ENCODE measurements at regions of chr19 and their contacts with region 1.

Region 1: DNA sequence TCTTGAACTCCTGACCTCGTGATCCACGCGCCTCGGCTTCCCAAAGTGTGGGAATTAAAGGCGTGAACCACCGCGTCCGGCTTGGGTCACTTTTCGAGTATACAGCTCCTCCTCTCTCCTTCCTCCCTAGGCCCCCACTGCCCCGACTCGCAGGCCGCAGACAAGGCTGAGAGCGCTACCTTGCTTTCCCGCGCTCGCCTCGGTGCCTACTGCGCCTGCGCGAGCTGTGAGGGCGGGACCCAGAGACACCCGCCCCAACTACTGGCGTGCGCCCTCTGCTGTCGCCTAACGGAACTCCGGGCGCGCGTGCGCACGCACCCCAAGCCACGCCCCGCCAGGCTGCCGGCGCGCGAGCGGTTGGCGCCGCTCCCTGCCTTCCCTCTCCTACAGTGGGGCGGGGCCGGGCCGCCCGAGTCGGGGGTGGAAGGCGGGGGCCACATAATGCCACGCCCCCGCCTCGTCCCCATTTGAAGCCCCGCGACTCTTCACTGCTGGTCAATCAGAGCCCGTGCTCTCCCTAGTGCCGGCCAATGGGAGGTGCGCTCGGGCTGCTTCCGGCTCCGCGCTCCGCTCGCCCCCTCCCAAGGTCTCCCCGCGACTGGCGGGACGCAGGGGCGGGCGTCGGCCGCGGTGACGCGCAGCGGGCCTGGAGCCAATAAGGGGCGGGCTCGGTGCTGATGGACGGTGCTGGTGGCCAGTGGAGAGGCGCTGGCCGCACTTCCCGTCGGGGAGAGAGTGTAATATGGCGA is at the start of gene RAB8A:
- DNase-seq: peak; percentile 99
- H3K4me3 ChIP-seq: peak within 1 kb of the TSS; percentile 90
- H3K27ac ChIP-seq: peak within 1 kb of the TSS; percentile 95
- H3K4me1 ChIP-seq: peaks cover 17% of the 10 kb centered on the region
- H3K27me3 ChIP-seq: no peaks in the 10 kb centered on the region
- CTCF ChIP-seq: peak; percentile 85
- total RNA-seq, gene RAB8A: 113 and 126 TPM in 2 replicates

Region 2: DNA sequence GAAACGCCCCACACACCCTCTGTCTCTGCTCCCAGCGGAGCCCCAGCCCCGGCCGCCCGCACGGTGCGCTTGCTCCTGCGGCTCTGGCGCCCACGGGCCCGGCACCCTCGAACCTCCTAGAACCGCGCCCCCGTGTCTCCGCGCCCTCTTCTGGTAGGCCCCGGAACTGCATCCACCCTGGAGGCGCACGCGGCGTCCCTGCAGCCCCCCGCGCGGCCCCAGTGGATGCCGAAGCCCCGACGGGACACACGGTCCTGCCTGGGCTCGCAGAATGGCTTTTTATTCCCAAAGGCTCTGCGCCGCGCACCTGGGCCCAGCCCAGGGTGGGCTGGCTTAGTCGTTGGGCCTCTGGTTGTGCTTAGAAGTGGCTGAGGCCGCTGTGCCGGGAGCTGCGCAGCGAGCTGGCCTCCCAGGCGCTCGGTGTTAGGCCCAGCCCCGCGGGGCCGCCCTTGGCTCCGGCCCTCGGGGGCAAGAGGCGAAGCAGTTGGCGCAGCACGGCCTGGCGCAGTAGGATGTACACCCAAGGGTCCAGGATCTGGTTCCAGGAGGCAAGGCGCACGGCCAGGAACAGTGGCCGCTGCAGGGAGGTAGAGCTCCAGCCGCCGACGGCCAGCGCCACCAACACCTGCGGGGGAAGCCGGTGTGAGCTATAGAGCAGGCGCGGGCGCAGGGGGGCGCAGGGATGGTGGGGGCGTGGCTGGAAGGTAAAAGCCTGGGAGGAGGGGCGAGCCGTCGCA is 1639.0 kb before region 1 on chr19:
- CTCF ChIA-PET with region 1: interaction called, 12 read pairs
- POLR2A ChIA-PET with region 1: no interaction called
- intact Hi-C with region 1: no loop called
- DNase-seq: peak; percentile 80
- H3K4me3 ChIP-seq: no peak overlapping the region
- H3K27ac ChIP-seq: no peak overlapping the region
- H3K4me1 ChIP-seq: peaks cover 28% of the 10 kb centered on the region
- H3K27me3 ChIP-seq: no peaks in the 10 kb centered on the region
- CTCF ChIP-seq: peak; percentile 99

Region 3: DNA sequence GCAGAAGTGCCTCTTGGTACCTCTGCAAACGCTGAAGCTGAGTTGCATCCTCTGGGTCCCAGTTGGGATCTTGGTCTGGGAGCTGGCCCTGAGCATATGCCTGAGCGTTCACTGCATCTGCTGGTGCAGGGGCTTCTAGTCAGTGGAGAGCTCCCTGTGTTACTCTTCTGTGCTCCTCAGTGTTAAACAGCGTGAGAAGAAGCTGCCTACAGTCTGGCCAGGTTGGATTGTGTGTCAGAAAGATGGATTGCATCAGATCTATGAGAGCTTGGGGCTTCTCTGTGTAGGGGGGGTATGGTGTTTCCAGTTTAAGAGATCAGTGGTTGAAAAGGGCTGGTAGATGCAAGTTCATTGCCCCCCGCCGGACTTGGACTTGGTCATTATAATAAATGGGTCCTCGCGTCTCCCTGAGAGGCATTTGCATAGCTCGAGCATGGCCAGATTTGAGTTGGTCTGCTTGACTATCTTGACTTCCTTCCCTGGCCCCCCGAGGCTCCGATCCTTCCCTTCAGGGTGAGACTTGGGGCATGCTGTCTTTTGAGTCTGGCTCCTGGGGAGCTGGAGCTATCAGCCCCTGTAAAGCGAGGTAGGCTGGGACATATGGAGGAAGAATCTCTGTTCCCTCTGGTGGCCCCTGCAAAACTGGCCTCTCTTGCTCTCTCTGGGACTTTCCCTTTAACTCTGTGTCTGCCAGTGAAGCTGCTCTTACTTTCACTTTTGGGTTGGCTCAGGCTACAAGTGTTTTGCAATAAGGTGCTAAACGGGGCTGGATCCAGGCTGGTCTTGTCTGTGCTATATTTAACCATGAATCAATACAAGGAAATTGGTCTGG is 109.6 kb before region 1 on chr19:
- CTCF ChIA-PET with region 1: no interaction called
- POLR2A ChIA-PET with region 1: no interaction called
- intact Hi-C with region 1: no loop called
- DNase-seq: no peak
- H3K4me3 ChIP-seq: no peak overlapping the region
- H3K27ac ChIP-seq: no peak overlapping the region
- H3K4me1 ChIP-seq: no peaks in the 10 kb centered on the region
- H3K27me3 ChIP-seq: no peaks in the 10 kb centered on the region
- CTCF ChIP-seq: no peak

Region 4: DNA sequence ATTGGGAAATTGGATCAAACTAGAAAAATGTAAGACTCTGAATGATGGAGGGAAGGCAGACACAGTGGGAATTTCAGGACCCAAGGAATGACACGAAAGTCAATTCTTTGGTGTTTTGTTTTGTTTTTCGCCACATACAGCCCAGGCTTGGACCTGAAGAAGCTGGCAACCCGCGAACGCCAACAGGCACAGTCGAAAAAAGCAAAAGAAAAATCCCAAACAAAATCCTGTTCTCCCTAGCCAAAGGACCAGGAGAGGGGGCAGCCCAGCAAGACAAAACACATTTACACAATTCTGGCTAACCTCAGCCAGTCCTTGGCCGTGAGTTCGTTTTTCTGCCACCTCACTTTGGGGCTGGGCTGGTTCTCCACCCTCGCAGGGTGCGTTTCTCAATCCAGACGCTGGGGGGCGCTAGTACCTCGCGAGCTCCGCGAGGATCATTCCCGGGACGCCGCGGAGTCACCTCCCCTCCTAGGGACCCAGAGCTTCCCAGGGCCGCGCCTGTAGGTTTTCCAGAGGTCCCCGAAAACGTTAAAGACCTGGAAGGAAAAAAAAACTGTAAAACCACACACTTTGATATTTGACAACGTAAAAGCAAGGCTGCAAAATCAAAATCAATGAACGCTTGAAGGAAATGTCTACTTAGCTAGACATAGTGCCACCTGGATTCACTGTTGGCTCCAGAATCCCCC is 69.9 kb before region 1 on chr19:
- CTCF ChIA-PET with region 1: interaction called, 9 read pairs
- POLR2A ChIA-PET with region 1: no interaction called
- intact Hi-C with region 1: loop called (anchors 2 kb)
- DNase-seq: peak; percentile 83
- H3K4me3 ChIP-seq: peak overlapping the region; percentile 29
- H3K27ac ChIP-seq: no peak overlapping the region
- H3K4me1 ChIP-seq: no peaks in the 10 kb centered on the region
- H3K27me3 ChIP-seq: no peaks in the 10 kb centered on the region
- CTCF ChIP-seq: peak; percentile 98

Region 5: GRCh38 chr19:16076958-16077611 is 34.2 kb before region 1 on chr19:
- CTCF ChIA-PET with region 1: interaction called, 3 read pairs
- POLR2A ChIA-PET with region 1: no interaction called
- intact Hi-C with region 1: loop called (anchors 1 kb)
- DNase-seq: peak; percentile 72
- H3K4me3 ChIP-seq: peak overlapping the region; percentile 93
- H3K27ac ChIP-seq: peak overlapping the region; percentile 100
- H3K4me1 ChIP-seq: peaks cover 20% of the 10 kb centered on the region
- H3K27me3 ChIP-seq: no peaks in the 10 kb centered on the region
- CTCF ChIP-seq: no peak

Region 6: GRCh38 chr19:16338470-16339360 is 227.4 kb after region 1 on chr19:
- CTCF ChIA-PET with region 1: no interaction called
- POLR2A ChIA-PET with region 1: no interaction called
- intact Hi-C with region 1: no loop called
- DNase-seq: no peak
- H3K4me3 ChIP-seq: no peak overlapping the region
- H3K27ac ChIP-seq: no peak overlapping the region
- H3K4me1 ChIP-seq: peaks cover 6% of the 10 kb centered on the region
- H3K27me3 ChIP-seq: no peaks in the 10 kb centered on the region
- CTCF ChIP-seq: no peak

Measured in A673 (cell line).